OCI-LY7 (cell line): ENCODE measurements at regions of chr11 and their contacts with region 1.

Region 1: DNA sequence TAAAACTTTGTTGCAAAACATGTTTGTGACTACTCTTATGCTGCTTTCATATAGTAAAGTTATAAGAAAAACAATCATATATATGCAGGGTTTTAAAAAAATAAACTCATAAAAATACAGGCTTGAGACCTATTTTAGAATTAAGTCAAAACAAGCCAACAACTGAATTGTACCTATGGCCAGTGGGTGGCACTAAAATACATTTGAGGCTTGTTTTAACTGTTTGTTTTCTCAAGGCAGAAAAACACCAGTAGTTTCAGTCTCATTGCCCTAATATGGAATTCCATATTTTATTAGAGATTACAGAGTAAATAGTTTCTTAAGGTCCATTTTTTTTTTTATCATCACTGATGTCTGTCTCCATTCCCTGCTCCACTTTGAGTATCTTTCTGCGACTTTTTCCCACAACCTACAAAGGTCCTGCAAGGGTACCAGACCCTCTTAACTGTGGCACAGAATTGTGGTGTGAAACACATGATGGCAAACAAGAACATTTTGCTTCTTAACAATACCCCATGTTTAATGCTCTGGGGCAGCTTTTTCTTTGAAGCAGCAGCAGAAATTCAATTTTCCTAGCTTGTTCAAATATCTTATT is 8.5 kb upstream of the CCDC89 start:
- DNase-seq: peak; percentile 24
- H3K4me3 ChIP-seq: no peak overlapping the region
- H3K27ac ChIP-seq: no peak overlapping the region
- H3K4me1 ChIP-seq: no peaks in the 10 kb centered on the region
- CTCF ChIP-seq: peak; percentile 80

Region 2: GRCh38 chr11:85752890-85753581 is 58.6 kb after region 1 on chr11:
- CTCF ChIA-PET with region 1: no interaction called
- POLR2A ChIA-PET with region 1: no interaction called
- intact Hi-C with region 1: no loop called
- DNase-seq: no peak
- H3K4me3 ChIP-seq: no peak overlapping the region
- H3K27ac ChIP-seq: no peak overlapping the region
- H3K4me1 ChIP-seq: peaks cover 5% of the 10 kb centered on the region
- CTCF ChIP-seq: no peak

Region 3: GRCh38 chr11:85826116-85826855 is 131.8 kb after region 1 on chr11:
- CTCF ChIA-PET with region 1: no interaction called
- POLR2A ChIA-PET with region 1: interaction called, 3 read pairs
- intact Hi-C with region 1: loop called (anchors 10 kb)
- DNase-seq: peak; percentile 13
- H3K4me3 ChIP-seq: no peak overlapping the region
- H3K27ac ChIP-seq: no peak overlapping the region
- H3K4me1 ChIP-seq: no peaks in the 10 kb centered on the region
- CTCF ChIP-seq: peak; percentile 64